ENCODE measurements at regions of chr1 and their contacts with region 1.

Region 1: GRCh38 chr1:155167166-155168104 is 5.7 kb downstream of the KRTCAP2 start:
- DNase-seq: peak; percentile 73 to 88 (median 80)
- H3K4me3 ChIP-seq: peak overlapping the region; percentile 30
- H3K4me3 Mint-ChIP-seq: peak overlapping the region; percentile 31 to 71 (median 48)
- H3K27ac ChIP-seq: no peak overlapping the region
- H3K27ac Mint-ChIP-seq: peak overlapping the region in 4 of 8 donors; percentile 5 to 55 (median 28)
- H3K4me1 ChIP-seq: peaks cover 18% of the 10 kb centered on the region
- H3K4me1 Mint-ChIP-seq: peaks cover 17 to 30% (median 20%) of the 10 kb centered on the region in 3 donors
- H3K27me3 ChIP-seq: no peaks in the 10 kb centered on the region
- H3K27me3 Mint-ChIP-seq: peaks cover 2 to 3% of the 10 kb centered on the region in 2 donors

Region 2: GRCh38 chr1:155099331-155099730 is 68.1 kb before region 1 on chr1:
- CTCF ChIA-PET with region 1: interaction called, 10 read pairs
- POLR2A ChIA-PET with region 1: interaction called, 3 read pairs
- DNase-seq: no peak
- H3K4me3 ChIP-seq: no peak overlapping the region
- H3K4me3 Mint-ChIP-seq: no peak overlapping the region
- H3K27ac ChIP-seq: no peak overlapping the region
- H3K27ac Mint-ChIP-seq: no peak overlapping the region
- H3K4me1 ChIP-seq: no peaks in the 10 kb centered on the region
- H3K4me1 Mint-ChIP-seq: no peaks in the 10 kb centered on the region
- H3K27me3 ChIP-seq: no peaks in the 10 kb centered on the region
- H3K27me3 Mint-ChIP-seq: peaks cover 4 to 20% of the 10 kb centered on the region in 2 donors

Region 3: GRCh38 chr1:155257361-155257760 is 89.9 kb after region 1 on chr1:
- CTCF ChIA-PET with region 1: no interaction called
- POLR2A ChIA-PET with region 1: no interaction called
- DNase-seq: no peak
- H3K4me3 ChIP-seq: no peak overlapping the region
- H3K4me3 Mint-ChIP-seq: peak overlapping the region in 1 of 7 donors; percentile 75
- H3K27ac ChIP-seq: no peak overlapping the region
- H3K27ac Mint-ChIP-seq: peak overlapping the region in 2 of 8 donors; percentile 17 to 59
- H3K4me1 ChIP-seq: peaks cover 24% of the 10 kb centered on the region
- H3K4me1 Mint-ChIP-seq: peaks cover 43 to 55% (median 54%) of the 10 kb centered on the region in 3 donors
- H3K27me3 ChIP-seq: no peaks in the 10 kb centered on the region
- H3K27me3 Mint-ChIP-seq: no peaks in the 10 kb centered on the region

Measured in CD8-positive, alpha-beta memory T cell (primary cell).